ENCODE measurements at regions of chr14 and their contacts with region 1.

Region 1: GRCh38 chr14:104826189-104826860 is 25.4 kb downstream of the ZBTB42 start:
- DNase-seq: peak; percentile 88 to 91
- H3K4me3 ChIP-seq: peak overlapping the region; percentile 37 to 73 (median 41)
- H3K27ac ChIP-seq: peak overlapping the region in 2 of 3 donors; percentile 35 to 62
- H3K4me1 ChIP-seq: peaks cover 13 to 17% of the 10 kb centered on the region in 2 donors
- H3K27me3 ChIP-seq: no peaks in the 10 kb centered on the region
- CTCF ChIP-seq: peak; percentile 27 to 95 (median 85)
- POLR2A ChIP-seq: no peak

Region 2: GRCh38 chr14:104768437-104769323 is 57.6 kb before region 1 on chr14:
- intact Hi-C with region 1: loop called (anchors 2 kb)
- DNase-seq: peak; percentile 90 to 91
- H3K4me3 ChIP-seq: no peak overlapping the region
- H3K27ac ChIP-seq: peak overlapping the region; percentile 46 to 62 (median 54)
- H3K4me1 ChIP-seq: peaks cover 11 to 17% of the 10 kb centered on the region in 2 donors
- H3K27me3 ChIP-seq: no peaks in the 10 kb centered on the region
- CTCF ChIP-seq: peak; percentile 71 to 94 (median 90)
- POLR2A ChIP-seq: peak in 1 of 2 donors; percentile 3

Region 3: GRCh38 chr14:104865644-104866441 is 39.5 kb after region 1 on chr14:
- intact Hi-C with region 1: loop called (anchors 2 kb)
- DNase-seq: peak; percentile 77
- H3K4me3 ChIP-seq: peak overlapping the region; percentile 51 to 56 (median 53)
- H3K27ac ChIP-seq: peak overlapping the region in 2 of 3 donors; percentile 2 to 62
- H3K4me1 ChIP-seq: peaks cover 20 to 29% of the 10 kb centered on the region in 2 donors
- H3K27me3 ChIP-seq: no peaks in the 10 kb centered on the region
- CTCF ChIP-seq: no peak
- POLR2A ChIP-seq: peak in 1 of 2 donors; percentile 46

Region 4: DNA sequence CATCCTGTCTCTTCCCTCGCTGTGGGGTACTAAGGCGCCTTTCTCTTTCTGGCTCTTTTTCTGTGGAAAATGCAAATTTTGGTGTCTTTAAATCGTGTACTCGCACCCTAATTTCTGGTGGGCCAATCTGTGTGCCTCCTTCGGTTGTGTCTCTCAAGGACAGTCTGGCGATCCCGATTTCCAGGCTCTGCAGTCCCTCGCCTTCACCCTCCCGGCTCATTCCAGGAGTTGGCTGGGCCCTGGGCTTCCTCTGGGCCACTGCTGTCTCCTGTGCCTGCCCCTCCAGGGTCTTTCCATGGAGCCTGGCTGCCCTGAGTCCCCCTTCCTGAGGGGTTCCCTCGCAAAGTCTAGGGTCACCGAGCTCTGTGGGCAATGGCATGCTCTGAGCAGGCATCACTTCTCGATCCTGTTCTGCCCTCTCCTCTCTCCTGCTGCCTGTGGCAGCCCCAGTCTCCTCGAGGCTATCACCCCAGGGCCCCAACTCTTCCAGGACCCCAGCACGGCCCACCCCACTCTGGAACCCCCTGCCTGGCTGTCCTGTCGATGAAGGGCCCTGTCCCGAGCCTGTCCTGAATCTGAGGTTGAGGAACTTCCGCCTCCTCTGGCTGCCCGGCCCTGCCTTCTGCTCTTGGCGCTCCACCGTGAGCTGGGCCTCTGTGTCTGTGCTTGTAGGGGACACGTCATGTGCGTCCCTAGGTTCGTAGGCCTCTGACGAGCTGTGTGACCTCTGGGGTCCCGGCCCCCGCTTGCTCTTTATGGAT is 127.8 kb after region 1 on chr14:
- intact Hi-C with region 1: no loop called
- DNase-seq: no peak
- H3K4me3 ChIP-seq: no peak overlapping the region
- H3K27ac ChIP-seq: no peak overlapping the region
- H3K4me1 ChIP-seq: peaks cover 0 to 9% of the 10 kb centered on the region in 2 donors
- H3K27me3 ChIP-seq: no peaks in the 10 kb centered on the region
- CTCF ChIP-seq: no peak
- POLR2A ChIP-seq: no peak

Region 5: GRCh38 chr14:104976198-104977007 is 150.1 kb after region 1 on chr14:
- intact Hi-C with region 1: loop called (anchors 10 kb)
- DNase-seq: peak; percentile 86 to 91
- H3K4me3 ChIP-seq: no peak overlapping the region
- H3K27ac ChIP-seq: no peak overlapping the region
- H3K4me1 ChIP-seq: peaks cover 52 to 94% of the 10 kb centered on the region in 2 donors
- H3K27me3 ChIP-seq: no peaks in the 10 kb centered on the region
- CTCF ChIP-seq: peak; percentile 84 to 94 (median 88)
- POLR2A ChIP-seq: no peak